Heart left ventricle (tissue), 16 donors: ENCODE measurements at regions of chr3 and their contacts with region 1.

Region 1: DNA sequence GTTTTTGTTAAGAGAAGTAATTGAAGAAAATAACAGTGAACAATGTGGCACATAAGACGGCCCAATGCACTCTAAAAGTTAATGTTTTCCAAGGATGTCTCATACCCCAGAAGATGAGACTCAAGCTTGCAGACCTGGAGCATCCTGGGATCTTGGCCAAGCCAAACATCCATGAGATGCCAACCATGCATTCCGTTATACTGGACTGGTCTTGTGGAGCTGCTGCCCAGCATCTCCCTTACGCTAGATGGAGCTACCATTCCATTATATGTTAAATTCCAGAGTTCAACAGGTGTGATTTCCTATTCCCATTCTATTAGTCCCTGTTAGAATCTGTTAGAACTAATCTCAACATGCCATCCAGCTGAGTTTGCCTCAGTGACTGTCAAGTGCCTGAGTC is 181.8 kb downstream of the PDCD6IP start:
- DNase-seq: no peak
- ATAC-seq: no peak
- H3K4me3 ChIP-seq: no peak overlapping the region
- H3K27ac ChIP-seq: no peak overlapping the region
- H3K4me1 ChIP-seq: no peaks in the 10 kb centered on the region
- H3K27me3 ChIP-seq: no peaks in the 10 kb centered on the region
- CTCF ChIP-seq: peak in 6 of 12 donors; percentile 25 to 50 (median 42)
- POLR2A ChIP-seq: no peak

Region 2: GRCh38 chr3:34676436-34676835 is 696.2 kb after region 1 on chr3:
- intact Hi-C with region 1: loop called in 1 of 10 experiments (anchors 5 kb)
- DNase-seq: no peak
- ATAC-seq: no peak
- H3K4me3 ChIP-seq: no peak overlapping the region
- H3K27ac ChIP-seq: no peak overlapping the region
- H3K4me1 ChIP-seq: peaks cover 0 to 10% (median 0%) of the 10 kb centered on the region in 12 donors
- H3K27me3 ChIP-seq: no peaks in the 10 kb centered on the region
- CTCF ChIP-seq: no peak
- POLR2A ChIP-seq: no peak